GM12878 (cell line): ENCODE measurements at regions of chr2 and their contacts with region 1.

Region 1: GRCh38 chr2:111126581-111126980 is 5.9 kb downstream of the BCL2L11 start:
- DNase-seq: no peak
- ATAC-seq: no peak
- H3K4me3 ChIP-seq: no peak overlapping the region
- H3K27ac ChIP-seq: no peak overlapping the region
- H3K4me1 ChIP-seq: no peaks in the 10 kb centered on the region; the same call in 1 of the 2 replicates
- H3K27me3 ChIP-seq: no peaks in the 10 kb centered on the region
- CTCF ChIP-seq: no peak
- EP300 ChIP-seq: no peak
- POLR2A ChIP-seq: no peak
- RAD21 ChIP-seq: no peak

Region 2: DNA sequence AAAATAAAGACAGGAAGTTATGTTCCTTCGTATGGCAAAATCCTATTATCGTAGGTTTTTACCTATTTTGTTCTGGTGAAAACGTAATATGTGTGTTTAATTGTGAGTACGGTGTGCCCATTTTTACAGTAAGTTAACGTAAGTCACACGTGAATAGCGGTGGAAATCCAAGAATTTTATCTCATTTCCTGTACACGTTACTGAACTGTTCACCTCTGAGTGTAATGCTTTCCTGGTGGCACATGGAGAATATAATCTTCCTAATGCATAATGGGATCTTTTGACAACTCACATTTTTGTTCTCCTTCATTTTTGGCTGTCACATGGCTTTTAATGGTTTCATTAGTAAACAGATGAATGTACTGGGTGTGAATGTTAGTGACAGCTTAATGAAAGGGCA is 22.3 kb after region 1 on chr2:
- CTCF ChIA-PET with region 1: interaction called, 4 read pairs
- POLR2A ChIA-PET with region 1: no interaction called
- RAD21 ChIA-PET with region 1: interaction called, 6 read pairs
- SMC1A ChIA-PET with region 1: interaction called, 27 read pairs
- in situ Hi-C with region 1: no loop called
- intact Hi-C with region 1: no loop called
- DNase-seq: no peak
- ATAC-seq: no peak
- H3K4me3 ChIP-seq: no peak overlapping the region
- H3K27ac ChIP-seq: no peak overlapping the region
- H3K4me1 ChIP-seq: peaks cover 6% of the 10 kb centered on the region
- H3K27me3 ChIP-seq: no peaks in the 10 kb centered on the region
- CTCF ChIP-seq: no peak
- EP300 ChIP-seq: no peak
- POLR2A ChIP-seq: no peak
- RAD21 ChIP-seq: no peak

Region 3: GRCh38 chr2:111157798-111158197 is 31.2 kb after region 1 on chr2:
- CTCF ChIA-PET with region 1: interaction called, 4 read pairs
- POLR2A ChIA-PET with region 1: interaction called, 3 read pairs
- RAD21 ChIA-PET with region 1: interaction called, 9 read pairs
- SMC1A ChIA-PET with region 1: interaction called, 26 read pairs
- in situ Hi-C with region 1: no loop called
- intact Hi-C with region 1: no loop called
- DNase-seq: peak; percentile 69
- ATAC-seq: peak; percentile 82
- H3K4me3 ChIP-seq: no peak overlapping the region
- H3K27ac ChIP-seq: no peak overlapping the region
- H3K4me1 ChIP-seq: peaks cover 19% of the 10 kb centered on the region
- H3K27me3 ChIP-seq: no peaks in the 10 kb centered on the region
- CTCF ChIP-seq: peak; percentile 19 to 27 (median 22); a peak in 3 of 6 replicates
- EP300 ChIP-seq: no peak
- POLR2A ChIP-seq: no peak
- RAD21 ChIP-seq: no peak